H1 (cell line): ENCODE measurements at regions of chr4 and their contacts with region 1.

Region 1: DNA sequence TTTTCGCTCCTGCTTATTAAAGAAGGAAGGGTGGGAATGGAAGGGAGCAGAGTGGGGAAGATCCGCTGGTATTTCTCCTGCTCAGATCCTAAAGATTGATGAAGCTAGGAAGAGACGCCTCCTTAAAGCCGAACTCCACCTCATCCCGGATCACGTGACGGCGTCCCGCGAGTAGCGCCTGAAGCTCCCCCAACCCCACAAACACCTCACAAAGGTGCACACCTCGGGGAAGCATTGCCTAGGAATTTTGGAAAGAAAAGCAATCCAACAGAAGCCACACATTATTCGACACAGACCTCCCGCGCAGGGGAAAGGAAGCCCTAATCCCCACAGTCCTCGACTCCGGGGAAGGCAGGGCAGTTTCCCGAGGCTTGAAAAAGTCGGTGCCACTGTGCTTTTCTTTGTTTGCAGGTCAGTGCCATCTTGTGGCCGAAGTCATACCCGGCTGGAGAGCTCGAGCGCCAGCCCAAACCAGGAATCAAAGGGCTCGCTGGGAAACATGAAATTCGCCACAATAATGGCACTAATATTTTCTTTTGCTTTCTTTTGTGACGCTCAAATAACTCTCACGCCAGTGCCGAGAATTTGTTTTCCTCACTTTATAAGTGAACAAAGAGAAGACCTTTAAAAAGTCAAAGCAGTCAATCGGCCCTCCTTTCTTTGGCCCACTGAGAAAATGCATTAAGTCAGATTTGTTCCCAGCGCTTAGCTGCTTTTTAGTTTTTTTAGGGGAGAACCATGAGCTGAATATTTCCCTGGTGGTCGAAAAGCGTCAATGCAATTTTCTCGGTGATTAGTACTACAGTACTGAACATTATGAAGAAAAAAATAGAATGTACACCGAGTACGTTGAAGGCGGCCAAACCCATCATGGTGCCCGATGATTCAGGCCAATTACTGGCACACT is at the start of gene NPY1R:
- DNase-seq: peak; percentile 46 to 82
- H3K4me3 ChIP-seq: peak within 1 kb of the TSS; percentile 50 to 83 (median 80)
- H3K27ac ChIP-seq: peak within 1 kb of the TSS; percentile 35
- H3K4me1 ChIP-seq: 0 out of 7 replicates have a peak, but pooled peaks cover 0 to 2% (median 0%) of the 10 kb centered on the region in 4 experiments
- H3K27me3 ChIP-seq: peaks cover 4 to 16% (median 12%) of the 10 kb centered on the region in 4 experiments; a peak in 6 of 7 replicates
- CTCF ChIP-seq: peak; percentile 72 to 85 (median 83)
- EP300 ChIP-seq: no peak
- POLR2A ChIP-seq: peak in 1 of 2 experiments; percentile 58; a peak in 2 of 3 replicates
- RAD21 ChIP-seq: peak; percentile 83 to 87
- total RNA-seq, gene NPY1R: 6.3 and 7.2 TPM in 2 replicates

Region 2: GRCh38 chr4:163048447-163048846 is 284.3 kb before region 1 on chr4:
- CTCF ChIA-PET with region 1: interaction called, 35 read pairs
- POLR2A ChIA-PET with region 1: no interaction called
- DNase-seq: peak in 1 of 2 experiments; percentile 2
- H3K4me3 ChIP-seq: no peak overlapping the region
- H3K27ac ChIP-seq: no peak overlapping the region
- H3K4me1 ChIP-seq: no peaks in the 10 kb centered on the region
- H3K27me3 ChIP-seq: no peaks in the 10 kb centered on the region
- CTCF ChIP-seq: peak; percentile 31 to 66 (median 59)
- EP300 ChIP-seq: no peak
- POLR2A ChIP-seq: no peak
- RAD21 ChIP-seq: peak; percentile 68 to 71

Region 3: GRCh38 chr4:163107754-163108153 is 225.0 kb before region 1 on chr4:
- CTCF ChIA-PET with region 1: interaction called, 75 read pairs
- POLR2A ChIA-PET with region 1: interaction called, 7 read pairs
- DNase-seq: no peak
- H3K4me3 ChIP-seq: no peak overlapping the region
- H3K27ac ChIP-seq: no peak overlapping the region
- H3K4me1 ChIP-seq: no peaks in the 10 kb centered on the region
- H3K27me3 ChIP-seq: no peaks in the 10 kb centered on the region
- CTCF ChIP-seq: peak in 2 of 3 experiments; percentile 9 to 15; a peak in 2 of 4 replicates
- EP300 ChIP-seq: no peak
- POLR2A ChIP-seq: no peak
- RAD21 ChIP-seq: peak in 1 of 2 experiments; percentile 29; a peak in 2 of 4 replicates

Region 4: GRCh38 chr4:163166041-163166579 is 166.6 kb before region 1 on chr4:
- CTCF ChIA-PET with region 1: interaction called, 15 read pairs
- POLR2A ChIA-PET with region 1: interaction called, 7 read pairs
- DNase-seq: peak in 1 of 2 experiments; percentile 77
- H3K4me3 ChIP-seq: peak overlapping the region; percentile 78 to 97 (median 85)
- H3K27ac ChIP-seq: peak overlapping the region; percentile 86
- H3K4me1 ChIP-seq: peaks cover 0 to 4% (median 1%) of the 10 kb centered on the region in 4 experiments; a peak in 2 of 7 replicates
- H3K27me3 ChIP-seq: no peaks in the 10 kb centered on the region
- CTCF ChIP-seq: no peak
- EP300 ChIP-seq: no peak
- POLR2A ChIP-seq: no peak; a peak in 1 of 3 replicates
- RAD21 ChIP-seq: no peak

Region 5: DNA sequence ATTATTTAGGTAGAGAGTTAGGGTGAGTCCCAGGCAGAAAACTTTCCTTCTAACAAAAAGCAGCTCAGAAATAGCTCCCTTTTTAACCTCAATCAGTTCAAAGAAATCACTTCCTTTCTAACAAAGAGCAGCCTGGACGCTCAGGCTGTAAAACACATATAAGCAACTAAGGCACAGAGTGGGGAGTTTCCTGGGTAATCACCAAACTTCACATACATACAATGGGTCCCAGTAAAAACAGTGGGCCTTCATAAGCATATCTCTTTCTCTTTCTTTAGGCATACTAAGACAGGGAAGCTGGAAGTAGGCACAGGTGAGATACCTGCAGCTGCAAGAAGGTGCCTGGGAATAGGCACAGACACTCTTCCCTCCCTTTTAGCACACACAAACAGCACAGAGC is 161.2 kb before region 1 on chr4:
- CTCF ChIA-PET with region 1: interaction called, 15 read pairs
- POLR2A ChIA-PET with region 1: interaction called, 7 read pairs
- DNase-seq: no peak
- H3K4me3 ChIP-seq: no peak overlapping the region
- H3K27ac ChIP-seq: no peak overlapping the region
- H3K4me1 ChIP-seq: no peaks in the 10 kb centered on the region
- H3K27me3 ChIP-seq: no peaks in the 10 kb centered on the region
- CTCF ChIP-seq: no peak
- EP300 ChIP-seq: no peak
- POLR2A ChIP-seq: no peak
- RAD21 ChIP-seq: no peak

Region 6: DNA sequence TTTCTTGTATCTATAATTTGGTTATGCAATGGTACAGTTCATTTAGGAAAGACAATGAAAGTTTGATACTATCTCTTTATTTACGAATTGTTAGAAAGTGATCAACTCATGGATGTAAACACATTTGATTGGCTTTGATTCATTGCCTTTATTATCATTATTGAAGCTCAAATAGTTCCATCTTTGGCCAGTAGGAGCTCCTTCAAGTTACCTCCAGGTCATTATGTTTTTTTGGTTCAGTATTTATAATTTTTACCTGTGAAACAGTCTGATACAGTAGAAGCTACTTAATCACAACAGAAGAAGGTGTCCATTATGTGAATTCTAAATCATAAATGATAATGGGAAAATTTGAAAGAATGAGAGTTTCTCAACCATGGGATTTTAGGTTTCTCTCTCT is 23.4 kb after region 1 on chr4:
- CTCF ChIA-PET with region 1: interaction called, 16 read pairs
- POLR2A ChIA-PET with region 1: interaction called, 5 read pairs
- DNase-seq: no peak
- H3K4me3 ChIP-seq: no peak overlapping the region
- H3K27ac ChIP-seq: no peak overlapping the region
- H3K4me1 ChIP-seq: no peaks in the 10 kb centered on the region
- H3K27me3 ChIP-seq: no peaks in the 10 kb centered on the region
- CTCF ChIP-seq: peak in 1 of 3 experiments; percentile 11; a peak in 1 of 4 replicates
- EP300 ChIP-seq: no peak
- POLR2A ChIP-seq: no peak
- RAD21 ChIP-seq: no peak

Region 7: GRCh38 chr4:163367651-163368050 is 34.9 kb after region 1 on chr4:
- CTCF ChIA-PET with region 1: no interaction called
- POLR2A ChIA-PET with region 1: no interaction called
- DNase-seq: no peak
- H3K4me3 ChIP-seq: no peak overlapping the region
- H3K27ac ChIP-seq: no peak overlapping the region
- H3K4me1 ChIP-seq: 0 out of 7 replicates have a peak, but pooled peaks cover 0 to 2% (median 0%) of the 10 kb centered on the region in 4 experiments
- H3K27me3 ChIP-seq: no peaks in the 10 kb centered on the region
- CTCF ChIP-seq: no peak
- EP300 ChIP-seq: no peak
- POLR2A ChIP-seq: no peak
- RAD21 ChIP-seq: no peak

Region 8: GRCh38 chr4:163494360-163495162 is 161.8 kb after region 1 on chr4 and contains the start of gene TMA16:
- CTCF ChIA-PET with region 1: interaction called, 3 read pairs
- POLR2A ChIA-PET with region 1: interaction called, 15 read pairs
- DNase-seq: peak; percentile 77 to 87
- H3K4me3 ChIP-seq: peak within 1 kb of the TSS; percentile 86 to 97 (median 89)
- H3K27ac ChIP-seq: peak within 1 kb of the TSS; percentile 93
- H3K4me1 ChIP-seq: 0 out of 7 replicates have a peak, but pooled peaks cover 0 to 3% (median 0%) of the 10 kb centered on the region in 4 experiments
- H3K27me3 ChIP-seq: no peaks in the 10 kb centered on the region
- CTCF ChIP-seq: no peak
- EP300 ChIP-seq: no peak; a peak in 1 of 3 replicates
- POLR2A ChIP-seq: peak; percentile 83 to 99
- RAD21 ChIP-seq: 0 out of 4 replicates have a peak, but pooled peaks of 1 of the 2 experiments have one; percentile 9
- total RNA-seq, gene TMA16: 64.2 and 67.3 TPM in 2 replicates